Activated CD4-positive, alpha-beta memory T cell treated with anti-CD3 and anti-CD28 coated beads, Interleukin-2, amount 10 ng/mL, durations not matched to agents 7 days and 5 days (primary cell): ENCODE measurements at regions of chr11 and their contacts with region 1.

Region 1: GRCh38 chr11:78022397-78023396 is at the start of gene KCTD14:
- DNase-seq: no peak
- H3K4me3 Mint-ChIP-seq: no peak within 1 kb of the TSS
- H3K27ac Mint-ChIP-seq: no peak within 1 kb of the TSS
- H3K4me1 Mint-ChIP-seq: peaks cover 4% of the 10 kb centered on the region
- H3K27me3 Mint-ChIP-seq: peaks cover 11% of the 10 kb centered on the region
- total RNA-seq, gene KCTD14: 0.15 to 0.45 TPM

Region 2: GRCh38 chr11:77370226-77370625 is 652.5 kb before region 1 on chr11:
- CTCF ChIA-PET with region 1: no interaction called
- POLR2A ChIA-PET with region 1: no interaction called
- DNase-seq: no peak
- H3K4me3 Mint-ChIP-seq: no peak overlapping the region
- H3K27ac Mint-ChIP-seq: no peak overlapping the region
- H3K4me1 Mint-ChIP-seq: no peaks in the 10 kb centered on the region
- H3K27me3 Mint-ChIP-seq: no peaks in the 10 kb centered on the region

Region 3: GRCh38 chr11:77959434-77959833 is 63.3 kb before region 1 on chr11:
- CTCF ChIA-PET with region 1: no interaction called
- POLR2A ChIA-PET with region 1: no interaction called
- DNase-seq: no peak
- H3K4me3 Mint-ChIP-seq: no peak overlapping the region
- H3K27ac Mint-ChIP-seq: no peak overlapping the region
- H3K4me1 Mint-ChIP-seq: no peaks in the 10 kb centered on the region
- H3K27me3 Mint-ChIP-seq: no peaks in the 10 kb centered on the region

Region 4: GRCh38 chr11:78045851-78046485 is 23.3 kb after region 1 on chr11:
- CTCF ChIA-PET with region 1: interaction called, 12 read pairs
- POLR2A ChIA-PET with region 1: no interaction called
- DNase-seq: peak; percentile 73
- H3K4me3 Mint-ChIP-seq: peak overlapping the region; percentile 14
- H3K27ac Mint-ChIP-seq: no peak overlapping the region
- H3K4me1 Mint-ChIP-seq: peaks cover 23% of the 10 kb centered on the region
- H3K27me3 Mint-ChIP-seq: peaks cover 4% of the 10 kb centered on the region